HepG2 (cell line): ENCODE measurements at regions of chr14 and their contacts with region 1.

Region 1: DNA sequence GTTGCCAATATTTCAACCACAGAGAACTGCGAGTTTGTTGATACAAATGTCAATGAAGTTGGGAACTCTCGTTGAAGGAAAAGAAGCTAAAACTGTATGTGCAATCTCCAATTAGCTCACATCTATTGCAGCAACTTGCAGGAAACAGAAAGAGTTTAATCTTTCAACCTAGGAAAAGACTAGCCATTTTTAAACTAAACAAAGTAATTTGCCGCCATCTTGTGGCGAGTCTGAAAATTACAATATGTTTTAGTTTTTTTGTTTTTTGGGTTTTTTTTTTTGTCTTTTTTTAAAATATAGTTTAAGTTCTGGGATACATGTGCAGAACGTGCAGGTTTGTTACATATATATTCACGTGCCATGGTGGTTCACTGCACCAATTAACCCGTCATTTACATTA is 131.2 kb upstream of the FOXG1 start:
- DNase-seq: peak; percentile 39
- ATAC-seq: peak; percentile 50; the same call in 2 of the 3 replicates
- H3K4me3 ChIP-seq: no peak overlapping the region
- H3K27ac ChIP-seq: no peak overlapping the region
- H3K4me1 ChIP-seq: no peaks in the 10 kb centered on the region
- H3K27me3 ChIP-seq: no peaks in the 10 kb centered on the region
- CTCF ChIP-seq: peak; percentile 64
- EP300 ChIP-seq: no peak
- POLR2A ChIP-seq: no peak
- RAD21 ChIP-seq: no peak

Region 2: DNA sequence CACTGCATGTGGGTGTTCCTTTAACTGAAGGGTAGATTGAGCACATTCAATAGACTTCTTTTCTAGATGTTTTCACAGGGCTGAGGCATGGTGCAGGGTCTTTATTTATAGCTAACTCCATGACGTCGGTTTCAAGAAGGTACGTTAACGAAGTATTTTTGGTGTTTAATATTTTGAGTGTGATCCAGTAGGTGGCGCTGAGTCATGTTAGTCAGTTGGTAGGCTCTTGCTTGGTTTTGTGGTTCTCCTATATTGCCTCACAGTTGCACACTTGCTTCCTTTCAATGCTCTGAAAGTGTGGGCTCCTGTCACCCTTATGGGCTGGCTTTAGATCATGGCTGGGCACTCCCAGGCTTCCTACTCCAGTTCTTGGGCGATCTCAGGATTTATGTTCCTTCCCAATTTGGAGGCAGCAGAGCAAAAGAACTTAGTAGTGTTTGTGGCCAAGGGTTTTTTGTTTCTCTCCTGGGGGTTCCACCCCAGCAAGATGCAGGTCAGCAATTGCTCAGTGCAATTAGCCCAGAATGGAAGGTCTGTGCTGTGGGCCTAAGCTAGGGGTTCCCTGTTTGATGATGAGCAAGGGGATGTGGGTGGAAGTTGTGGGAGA is 340.4 kb before region 1 on chr14:
- CTCF ChIA-PET with region 1: no interaction called
- POLR2A ChIA-PET with region 1: no interaction called
- in situ Hi-C with region 1: no loop called
- intact Hi-C with region 1: loop called (anchors 1 kb)
- DNase-seq: peak; percentile 27
- ATAC-seq: peak; percentile 49; the same call in 2 of the 3 replicates
- H3K4me3 ChIP-seq: no peak overlapping the region
- H3K27ac ChIP-seq: no peak overlapping the region
- H3K4me1 ChIP-seq: no peaks in the 10 kb centered on the region
- H3K27me3 ChIP-seq: no peaks in the 10 kb centered on the region
- CTCF ChIP-seq: peak; percentile 33
- EP300 ChIP-seq: no peak
- POLR2A ChIP-seq: no peak
- RAD21 ChIP-seq: no peak

Region 3: GRCh38 chr14:28375295-28375694 is 260.1 kb before region 1 on chr14:
- CTCF ChIA-PET with region 1: no interaction called
- POLR2A ChIA-PET with region 1: no interaction called
- in situ Hi-C with region 1: no loop called
- intact Hi-C with region 1: loop called (anchors 1 kb)
- DNase-seq: no peak
- ATAC-seq: no peak
- H3K4me3 ChIP-seq: no peak overlapping the region
- H3K27ac ChIP-seq: no peak overlapping the region
- H3K4me1 ChIP-seq: no peaks in the 10 kb centered on the region
- H3K27me3 ChIP-seq: no peaks in the 10 kb centered on the region
- CTCF ChIP-seq: no peak
- EP300 ChIP-seq: no peak
- POLR2A ChIP-seq: no peak
- RAD21 ChIP-seq: no peak

Region 4: DNA sequence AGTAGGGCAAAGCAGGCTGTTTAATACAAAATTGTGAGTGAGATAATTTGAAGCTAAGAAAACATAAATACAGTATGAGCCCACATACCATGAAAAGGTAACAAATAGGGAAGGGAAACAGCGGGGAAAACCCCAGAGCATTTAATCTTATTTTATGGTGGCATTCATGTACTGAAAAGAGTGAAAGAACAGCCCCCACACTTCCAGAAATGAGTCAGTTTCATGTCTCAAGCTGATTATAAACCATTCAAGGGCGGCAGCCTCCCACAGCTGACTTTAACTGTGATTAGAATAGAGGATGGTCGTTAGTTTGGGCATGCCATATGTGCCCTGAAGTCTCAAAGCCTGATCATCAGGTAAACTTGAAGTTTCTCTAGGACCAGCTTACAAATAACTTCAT is 195.7 kb after region 1 on chr14:
- CTCF ChIA-PET with region 1: no interaction called
- POLR2A ChIA-PET with region 1: no interaction called
- in situ Hi-C with region 1: no loop called
- intact Hi-C with region 1: no loop called
- DNase-seq: no peak
- ATAC-seq: no peak
- H3K4me3 ChIP-seq: no peak overlapping the region
- H3K27ac ChIP-seq: no peak overlapping the region
- H3K4me1 ChIP-seq: no peaks in the 10 kb centered on the region
- H3K27me3 ChIP-seq: no peaks in the 10 kb centered on the region
- CTCF ChIP-seq: no peak
- EP300 ChIP-seq: no peak
- POLR2A ChIP-seq: no peak
- RAD21 ChIP-seq: no peak